ENCODE measurements at regions of chr2 and their contacts with region 1.

Region 1: GRCh38 chr2:204145263-204145751 is 208.7 kb downstream of the ICOS start:
- DNase-seq: peak; percentile 78
- H3K4me3 ChIP-seq: peak overlapping the region in 2 of 3 experiments; percentile 20 to 46
- H3K27ac ChIP-seq: no peak overlapping the region
- H3K4me1 ChIP-seq: peaks cover 4% of the 10 kb centered on the region
- H3K27me3 ChIP-seq: peaks cover 0 to 6% of the 10 kb centered on the region in 2 experiments
- CTCF ChIP-seq: peak; percentile 89 to 91
- POLR2A ChIP-seq: no peak

Region 2: GRCh38 chr2:204030322-204030721 is 115.0 kb before region 1 on chr2:
- CTCF ChIA-PET with region 1: interaction called, 21 read pairs
- POLR2A ChIA-PET with region 1: no interaction called
- dilution Hi-C with region 1: no loop called
- intact Hi-C with region 1: no loop called
- DNase-seq: no peak
- H3K4me3 ChIP-seq: no peak overlapping the region
- H3K27ac ChIP-seq: no peak overlapping the region
- H3K4me1 ChIP-seq: peaks cover 19% of the 10 kb centered on the region
- H3K27me3 ChIP-seq: no peaks in the 10 kb centered on the region
- CTCF ChIP-seq: no peak
- POLR2A ChIP-seq: no peak

Region 3: DNA sequence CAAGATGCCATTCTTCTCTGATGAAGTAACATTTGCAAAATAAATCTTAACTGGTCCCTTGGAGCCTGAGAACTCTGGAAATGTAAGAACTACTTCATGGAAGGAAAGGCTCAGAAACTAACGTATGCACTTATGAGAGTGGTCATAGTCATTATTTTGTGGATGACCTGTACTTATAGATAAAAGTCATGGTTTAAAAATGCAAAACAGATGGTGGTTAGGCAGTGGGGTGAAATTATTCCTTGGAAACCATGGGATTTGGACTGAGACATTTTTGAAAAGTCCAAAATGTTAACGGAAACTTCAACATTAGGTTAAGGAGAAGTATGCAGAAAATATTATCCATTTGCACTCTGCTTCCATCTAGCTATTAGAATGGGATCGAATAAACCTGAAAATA is 14.2 kb after region 1 on chr2:
- CTCF ChIA-PET with region 1: interaction called, 33 read pairs
- POLR2A ChIA-PET with region 1: no interaction called
- dilution Hi-C with region 1: no loop called
- intact Hi-C with region 1: no loop called
- DNase-seq: no peak
- H3K4me3 ChIP-seq: no peak overlapping the region
- H3K27ac ChIP-seq: no peak overlapping the region
- H3K4me1 ChIP-seq: no peaks in the 10 kb centered on the region
- H3K27me3 ChIP-seq: no peaks in the 10 kb centered on the region
- CTCF ChIP-seq: no peak
- POLR2A ChIP-seq: no peak

Region 4: DNA sequence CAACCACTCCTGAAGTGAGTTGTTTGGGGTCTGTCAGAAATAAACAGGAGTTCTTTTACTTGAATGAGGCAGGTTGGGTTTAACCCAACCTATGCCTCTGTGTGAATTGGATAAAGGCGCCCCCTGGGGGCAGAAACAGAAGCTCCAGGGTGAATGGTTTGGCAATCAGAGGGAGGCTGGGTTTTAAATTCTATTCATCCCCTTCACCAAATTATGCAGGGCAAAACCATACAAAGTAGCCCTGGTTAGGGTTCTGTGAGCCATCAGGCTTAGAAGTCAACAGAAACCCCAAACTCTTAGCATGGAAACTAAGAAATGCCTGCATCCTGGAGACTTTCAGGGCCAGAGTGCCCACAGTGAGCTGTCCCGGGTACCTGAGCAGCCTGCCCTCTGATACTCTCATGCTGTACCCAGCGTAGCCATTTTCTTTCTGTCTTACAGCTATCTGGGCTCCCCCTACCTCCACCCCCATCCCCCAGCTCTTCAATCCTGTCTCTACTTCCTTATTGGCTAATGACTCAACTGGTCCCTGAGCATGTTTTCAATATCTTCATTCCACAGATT is 32.8 kb after region 1 on chr2:
- CTCF ChIA-PET with region 1: interaction called, 72 read pairs
- POLR2A ChIA-PET with region 1: no interaction called
- dilution Hi-C with region 1: no loop called
- intact Hi-C with region 1: loop called (anchors 1 kb)
- DNase-seq: peak; percentile 34
- H3K4me3 ChIP-seq: no peak overlapping the region
- H3K27ac ChIP-seq: no peak overlapping the region
- H3K4me1 ChIP-seq: no peaks in the 10 kb centered on the region
- H3K27me3 ChIP-seq: peaks cover 5 to 8% of the 10 kb centered on the region in 2 experiments
- CTCF ChIP-seq: peak; percentile 61 to 63
- POLR2A ChIP-seq: no peak

Region 5: DNA sequence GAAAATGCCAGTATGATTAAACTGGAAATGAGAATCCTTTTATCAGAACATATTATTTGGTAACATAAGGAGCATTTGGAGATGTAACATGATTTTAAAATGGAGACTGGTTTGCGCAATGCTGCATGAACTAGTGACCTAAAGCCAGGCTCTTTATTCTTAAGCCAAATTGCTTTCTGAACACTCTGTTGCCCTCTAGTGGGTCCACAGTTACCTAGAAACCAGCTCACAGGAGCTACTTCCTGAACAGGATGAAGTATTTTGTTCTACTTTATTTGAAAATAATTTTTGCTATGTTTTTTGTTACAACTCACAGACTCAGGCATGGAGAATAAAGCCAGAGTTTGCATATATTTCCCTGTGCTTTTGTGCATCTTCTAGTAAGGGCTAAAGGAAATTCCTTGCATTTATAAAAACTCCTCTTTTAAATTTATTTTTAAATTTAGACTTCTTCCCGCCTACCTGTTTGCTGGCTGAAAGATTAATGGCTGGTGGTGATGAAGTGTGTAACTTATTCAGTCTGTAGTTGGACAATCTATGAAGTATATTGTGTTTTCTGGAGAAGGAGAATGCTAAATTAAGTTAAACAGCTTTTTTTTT is 546.7 kb after region 1 on chr2:
- CTCF ChIA-PET with region 1: interaction called, 11 read pairs
- POLR2A ChIA-PET with region 1: no interaction called
- dilution Hi-C with region 1: no loop called
- intact Hi-C with region 1: loop called (anchors 1 kb)
- DNase-seq: peak; percentile 90
- H3K4me3 ChIP-seq: no peak overlapping the region
- H3K27ac ChIP-seq: peak overlapping the region; percentile 36
- H3K4me1 ChIP-seq: peaks cover 18% of the 10 kb centered on the region
- H3K27me3 ChIP-seq: no peaks in the 10 kb centered on the region
- CTCF ChIP-seq: peak; percentile 68 to 72
- POLR2A ChIP-seq: no peak

Region 6: DNA sequence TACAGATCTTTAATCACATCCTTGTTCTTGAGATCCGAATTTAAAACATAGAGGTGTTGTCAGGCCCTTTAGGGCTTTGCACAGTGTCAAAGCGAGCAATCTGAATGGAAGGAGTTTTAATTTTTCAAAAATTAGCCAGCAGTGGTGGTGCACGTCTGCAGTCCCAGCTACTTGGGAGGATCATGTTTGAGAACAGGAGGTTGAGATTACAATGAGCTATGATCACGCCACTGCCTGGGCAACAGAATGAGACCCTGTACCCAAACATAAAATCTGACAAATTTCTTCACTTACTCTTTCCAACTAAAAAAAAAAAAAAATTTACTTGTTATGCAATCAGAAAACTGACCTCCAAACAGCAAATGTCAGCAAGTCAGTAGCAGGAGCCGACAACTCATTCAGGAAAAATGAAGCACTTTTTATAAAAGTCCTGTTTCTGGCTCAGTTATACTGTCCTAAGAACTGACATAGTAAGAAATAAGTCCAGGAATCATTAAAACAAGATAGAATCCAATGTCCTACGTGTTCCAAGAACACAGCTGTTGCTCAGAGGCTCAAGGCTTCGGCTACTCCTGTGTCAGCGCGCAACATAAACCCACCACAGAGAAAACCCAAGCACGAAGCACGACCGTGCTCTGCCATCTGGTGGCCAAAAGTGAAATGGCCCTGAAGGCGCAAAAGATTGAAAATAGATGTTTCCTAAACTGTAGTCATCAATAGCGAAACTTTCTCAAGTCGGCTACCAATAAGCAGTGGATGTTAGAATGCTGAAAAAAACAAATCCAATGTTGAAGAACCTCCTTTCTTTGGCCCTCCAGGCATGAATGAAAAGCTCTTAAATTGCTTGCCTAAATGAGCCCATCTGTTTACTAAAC is 1802.6 kb after region 1 on chr2:
- CTCF ChIA-PET with region 1: interaction called, 10 read pairs
- POLR2A ChIA-PET with region 1: no interaction called
- dilution Hi-C with region 1: no loop called
- intact Hi-C with region 1: no loop called
- DNase-seq: peak; percentile 74
- H3K4me3 ChIP-seq: no peak overlapping the region
- H3K27ac ChIP-seq: no peak overlapping the region
- H3K4me1 ChIP-seq: peaks cover 17% of the 10 kb centered on the region
- H3K27me3 ChIP-seq: peaks cover 3 to 7% of the 10 kb centered on the region in 2 experiments
- CTCF ChIP-seq: peak; percentile 84 to 94
- POLR2A ChIP-seq: no peak

Measured in endothelial cell of umbilical vein (primary cell).